ENCODE measurements at regions of chr4 and their contacts with region 1.

Region 1: GRCh38 chr4:39032218-39033085 is at the start of gene TMEM156:
- DNase-seq: peak; percentile 88
- H3K4me3 ChIP-seq: peak within 1 kb of the TSS; percentile 79
- H3K27ac ChIP-seq: peak within 1 kb of the TSS; percentile 91
- H3K4me1 ChIP-seq: peaks cover 67% of the 10 kb centered on the region
- CTCF ChIP-seq: no peak
- total RNA-seq, gene TMEM156: 25.0 and 29.0 TPM in 2 replicates

Region 2: GRCh38 chr4:37994569-37994968 is 1037.9 kb before region 1 on chr4:
- CTCF ChIA-PET with region 1: no interaction called
- POLR2A ChIA-PET with region 1: no interaction called
- intact Hi-C with region 1: loop called (anchors 5 kb)
- DNase-seq: peak; percentile 60
- H3K4me3 ChIP-seq: peak overlapping the region; percentile 61
- H3K27ac ChIP-seq: peak overlapping the region; percentile 75
- H3K4me1 ChIP-seq: peaks cover 98% of the 10 kb centered on the region
- CTCF ChIP-seq: no peak

Region 3: DNA sequence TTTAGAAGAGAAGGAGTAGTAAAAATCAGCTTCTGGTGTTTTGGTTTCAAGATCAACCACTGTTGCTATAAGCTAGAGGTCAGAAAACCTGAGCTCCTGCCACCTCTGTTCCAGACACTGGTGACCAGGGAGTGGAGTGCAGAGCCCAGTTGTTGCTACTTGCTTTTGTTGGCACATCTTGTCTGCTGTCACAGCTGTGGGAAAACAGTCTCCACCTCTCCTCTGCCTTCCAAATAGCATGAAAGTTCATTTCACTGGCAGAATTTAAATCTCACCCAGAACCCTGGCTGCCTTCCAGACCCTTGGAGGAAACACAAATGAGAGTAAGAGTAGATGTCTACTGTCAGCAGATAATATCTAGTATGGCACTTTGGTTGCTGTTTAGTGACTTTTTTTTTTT is 666.0 kb before region 1 on chr4:
- CTCF ChIA-PET with region 1: no interaction called
- POLR2A ChIA-PET with region 1: no interaction called
- intact Hi-C with region 1: no loop called
- DNase-seq: no peak
- H3K4me3 ChIP-seq: no peak overlapping the region
- H3K27ac ChIP-seq: no peak overlapping the region
- H3K4me1 ChIP-seq: no peaks in the 10 kb centered on the region
- CTCF ChIP-seq: no peak

Region 4: GRCh38 chr4:38837849-38838248 is 194.6 kb before region 1 on chr4:
- CTCF ChIA-PET with region 1: no interaction called
- POLR2A ChIA-PET with region 1: no interaction called
- intact Hi-C with region 1: no loop called
- DNase-seq: no peak
- H3K4me3 ChIP-seq: no peak overlapping the region
- H3K27ac ChIP-seq: no peak overlapping the region
- H3K4me1 ChIP-seq: no peaks in the 10 kb centered on the region
- CTCF ChIP-seq: no peak

Region 5: DNA sequence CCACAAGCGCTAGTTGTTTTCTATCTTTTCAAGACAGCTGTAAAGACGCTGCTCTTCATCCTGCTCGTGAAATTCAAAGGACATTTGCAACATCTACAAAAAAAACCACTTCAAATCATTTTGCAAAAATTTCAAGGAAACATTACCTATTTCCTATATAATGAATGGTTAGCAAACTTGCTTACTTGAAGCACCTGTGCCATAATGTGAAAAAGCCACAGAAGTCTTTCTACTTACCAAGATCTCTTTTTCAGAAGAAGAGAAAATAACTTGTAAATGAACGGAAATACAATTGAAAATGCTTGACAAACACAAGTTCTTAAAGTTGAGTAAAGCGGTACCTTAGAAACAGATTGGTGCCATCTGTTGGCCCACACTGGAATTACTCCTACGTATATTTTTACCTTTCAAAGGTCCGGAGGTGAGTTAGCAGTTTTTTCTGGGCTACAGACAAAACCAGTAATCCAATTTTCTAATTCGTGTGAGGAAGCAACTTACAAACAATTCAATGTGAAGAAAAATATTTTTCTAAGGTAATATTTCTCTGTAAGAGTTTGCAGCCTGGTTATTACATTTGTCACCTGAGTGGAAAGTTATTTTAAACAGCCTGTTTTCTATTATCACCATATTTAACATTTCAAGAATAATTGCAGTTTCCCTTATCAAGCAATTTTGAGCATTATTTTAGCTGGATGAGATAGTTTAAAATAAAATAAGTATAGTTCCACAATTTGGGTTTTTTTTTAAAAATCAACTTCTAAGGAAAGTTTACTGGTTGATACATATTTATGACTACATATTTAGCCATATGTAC is 175.7 kb before region 1 on chr4 and contains the start of gene TLR6:
- CTCF ChIA-PET with region 1: no interaction called
- POLR2A ChIA-PET with region 1: no interaction called
- intact Hi-C with region 1: loop called (anchors 2 kb)
- DNase-seq: peak; percentile 88
- H3K4me3 ChIP-seq: peak within 1 kb of the TSS; percentile 71
- H3K27ac ChIP-seq: peak within 1 kb of the TSS; percentile 77
- H3K4me1 ChIP-seq: peaks cover 51% of the 10 kb centered on the region
- CTCF ChIP-seq: peak; percentile 96
- total RNA-seq, gene TLR6: 1.5 TPM in 2 replicates

Region 6: DNA sequence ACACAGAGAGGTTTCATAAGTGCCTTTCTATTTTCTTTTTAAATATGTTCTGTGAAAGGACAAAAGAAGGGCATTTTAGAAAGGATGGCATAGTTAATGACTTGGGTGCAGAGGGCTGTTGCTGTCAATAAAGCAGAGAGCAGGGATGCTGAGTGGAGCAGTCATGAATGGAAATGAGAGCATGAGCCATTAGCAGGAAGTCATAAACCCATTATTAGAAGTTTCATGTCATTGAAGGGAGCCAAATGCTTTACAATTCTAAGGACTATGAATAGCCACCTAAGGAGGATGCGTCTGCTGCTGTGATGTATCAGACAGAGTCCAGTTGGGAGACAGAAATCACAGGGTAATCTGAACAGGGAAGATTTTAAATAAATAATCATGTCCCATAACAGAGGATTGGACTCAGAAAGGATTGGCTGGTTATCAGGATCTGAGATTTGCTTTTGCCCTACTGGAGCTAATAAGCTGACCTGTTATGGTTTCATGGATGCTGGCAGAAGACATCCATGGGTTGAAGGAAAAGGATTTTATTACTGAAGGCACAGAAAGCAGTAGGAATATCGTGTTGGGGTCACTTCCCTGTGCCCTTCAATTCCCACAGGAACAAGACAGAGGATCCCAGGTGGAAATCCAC is 102.3 kb after region 1 on chr4:
- CTCF ChIA-PET with region 1: no interaction called
- POLR2A ChIA-PET with region 1: interaction called, 4 read pairs
- intact Hi-C with region 1: loop called (anchors 2 kb)
- DNase-seq: peak; percentile 40
- H3K4me3 ChIP-seq: peak overlapping the region; percentile 6
- H3K27ac ChIP-seq: peak overlapping the region; percentile 3
- H3K4me1 ChIP-seq: peaks cover 20% of the 10 kb centered on the region
- CTCF ChIP-seq: no peak

Region 7: DNA sequence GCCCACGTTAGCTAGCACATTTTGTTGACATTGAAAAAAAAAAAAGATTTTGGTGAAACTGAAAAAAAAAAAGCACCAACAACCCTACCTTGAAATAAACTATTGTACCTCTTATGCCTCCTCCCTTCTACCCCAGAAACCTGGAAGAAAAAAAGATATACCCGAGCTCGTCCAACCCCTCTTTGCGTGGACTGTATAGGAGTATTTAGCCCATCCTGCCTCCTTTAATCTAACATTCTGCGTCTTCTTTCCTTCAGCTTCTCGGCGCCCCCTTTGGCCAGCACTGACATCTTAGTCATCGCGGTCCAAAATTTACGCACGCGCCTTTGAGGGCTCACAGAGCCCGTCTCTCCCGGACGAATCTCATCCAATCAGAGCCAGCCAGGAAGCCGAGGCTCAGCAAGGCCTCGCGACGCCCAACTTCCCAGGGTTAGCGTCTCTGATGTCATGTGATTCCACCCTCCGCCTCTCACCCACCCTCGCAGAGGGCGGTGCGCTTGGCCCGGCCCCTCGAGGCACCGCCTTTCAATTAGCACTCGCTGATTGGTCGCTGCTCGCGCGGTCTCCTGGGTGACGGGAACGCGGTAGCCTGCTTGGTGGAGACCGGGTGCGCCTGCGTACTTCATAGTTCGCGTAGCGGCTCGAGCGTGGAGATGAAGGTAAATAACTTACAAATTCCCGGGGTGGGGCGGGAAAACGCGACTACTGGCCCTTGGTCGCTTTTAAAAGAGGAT is 149.6 kb after region 1 on chr4 and contains the start of gene WDR19:
- CTCF ChIA-PET with region 1: no interaction called
- POLR2A ChIA-PET with region 1: interaction called, 3 read pairs
- intact Hi-C with region 1: loop called (anchors 1 kb)
- DNase-seq: peak; percentile 100
- H3K4me3 ChIP-seq: peak within 1 kb of the TSS; percentile 83
- H3K27ac ChIP-seq: peak within 1 kb of the TSS; percentile 55
- H3K4me1 ChIP-seq: peaks cover 17% of the 10 kb centered on the region
- CTCF ChIP-seq: peak; percentile 81
- total RNA-seq, gene WDR19: 40.5 and 41.2 TPM in 2 replicates

Region 8: GRCh38 chr4:40199999-40200874 is 1167.8 kb after region 1 on chr4:
- CTCF ChIA-PET with region 1: no interaction called
- POLR2A ChIA-PET with region 1: interaction called, 4 read pairs
- intact Hi-C with region 1: loop called (anchors 5 kb)
- DNase-seq: peak; percentile 83
- H3K4me3 ChIP-seq: peak overlapping the region; percentile 79
- H3K27ac ChIP-seq: peak overlapping the region; percentile 93
- H3K4me1 ChIP-seq: peaks cover 51% of the 10 kb centered on the region
- CTCF ChIP-seq: no peak